Naive thymus-derived CD4-positive, alpha-beta T cell (primary cell): ENCODE measurements at regions of chr6 and their contacts with region 1.

Region 1: DNA sequence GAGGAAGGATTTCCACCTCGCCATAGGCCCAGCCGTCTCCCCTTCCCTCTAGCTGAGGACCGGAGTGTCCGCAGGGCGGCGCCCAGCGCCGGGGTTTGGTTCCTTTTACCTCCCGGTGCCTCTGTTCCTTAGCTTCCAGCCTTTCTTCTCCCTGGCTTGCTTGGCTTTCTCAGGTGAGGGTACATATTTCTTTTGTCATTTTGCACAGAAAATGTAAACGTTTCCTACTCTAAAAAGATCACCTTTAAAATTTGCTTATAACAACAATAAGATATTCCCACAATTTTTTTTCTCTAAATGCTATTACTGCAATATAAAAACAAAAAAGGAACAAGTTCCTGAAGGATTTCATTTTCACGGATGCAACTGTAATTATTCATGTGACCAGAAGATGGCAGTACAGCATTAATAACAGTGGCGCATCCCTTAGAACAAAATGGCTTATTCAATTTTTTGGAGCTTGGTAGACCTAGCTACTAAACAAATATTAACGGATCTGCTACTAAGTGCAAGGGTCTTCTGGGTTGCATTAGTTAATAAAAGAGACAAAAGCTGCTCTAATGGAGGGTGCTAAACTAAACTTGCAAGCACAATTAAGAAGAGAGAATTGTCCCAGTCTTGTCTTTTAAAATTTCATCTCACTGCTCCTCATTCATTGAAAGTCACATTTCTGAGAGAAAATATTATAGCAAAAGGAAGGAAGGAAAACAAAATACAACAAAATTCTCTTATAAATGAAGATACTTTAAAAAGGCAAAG is 172.9 kb downstream of the ADGRG6 start:
- DNase-seq: peak in 7 of 9 donors; percentile 13 to 57 (median 48)
- ATAC-seq: peak; percentile 67
- H3K4me3 ChIP-seq: no peak overlapping the region
- H3K4me3 Mint-ChIP-seq: no peak overlapping the region
- H3K27ac ChIP-seq: no peak overlapping the region
- H3K27ac Mint-ChIP-seq: peak overlapping the region in 3 of 9 donors; percentile 10 to 48 (median 24)
- H3K4me1 ChIP-seq: no peaks in the 10 kb centered on the region
- H3K4me1 Mint-ChIP-seq: peaks cover 0 to 12% (median 6%) of the 10 kb centered on the region in 7 donors
- H3K27me3 ChIP-seq: no peaks in the 10 kb centered on the region
- H3K27me3 Mint-ChIP-seq: peaks cover 0 to 5% (median 0%) of the 10 kb centered on the region in 5 donors

Region 2: GRCh38 chr6:142146828-142147662 is 327.7 kb before region 1 on chr6 and contains the starts of genes NMBR and VTA1:
- CTCF ChIA-PET with region 1: interaction called, 3 read pairs
- POLR2A ChIA-PET with region 1: no interaction called
- intact Hi-C with region 1: loop called in 1 of 2 experiments (anchors 5 kb)
- DNase-seq: peak; percentile 81 to 98 (median 97)
- ATAC-seq: peak; percentile 99
- H3K4me3 ChIP-seq: peak within 1 kb of the TSS; percentile 95
- H3K4me3 Mint-ChIP-seq: peak within 1 kb of the TSS; percentile 88 to 98 (median 95)
- H3K27ac ChIP-seq: peak within 1 kb of the TSS; percentile 75
- H3K27ac Mint-ChIP-seq: peak within 1 kb of the TSS; percentile 80 to 98 (median 94)
- H3K4me1 ChIP-seq: peaks cover 22 to 25% of the 10 kb centered on the region in 2 donors
- H3K4me1 Mint-ChIP-seq: peaks cover 36 to 73% (median 65%) of the 10 kb centered on the region in 7 donors
- H3K27me3 ChIP-seq: no peaks in the 10 kb centered on the region
- H3K27me3 Mint-ChIP-seq: peaks cover 0 to 2% (median 0%) of the 10 kb centered on the region in 5 donors
- total RNA-seq, gene NMBR: not detected
- total RNA-seq, gene VTA1: 13.6 to 41.3 (median 32.6) TPM

Region 3: GRCh38 chr6:142387997-142388815 is 86.5 kb before region 1 on chr6:
- CTCF ChIA-PET with region 1: interaction called, 7 read pairs
- POLR2A ChIA-PET with region 1: no interaction called
- intact Hi-C with region 1: loop called in 1 of 2 experiments (anchors 2 kb)
- DNase-seq: peak in 7 of 9 donors; percentile 22 to 50 (median 26)
- ATAC-seq: peak; percentile 67
- H3K4me3 ChIP-seq: no peak overlapping the region
- H3K4me3 Mint-ChIP-seq: no peak overlapping the region
- H3K27ac ChIP-seq: no peak overlapping the region
- H3K27ac Mint-ChIP-seq: no peak overlapping the region
- H3K4me1 ChIP-seq: peaks cover 0 to 9% of the 10 kb centered on the region in 2 donors
- H3K4me1 Mint-ChIP-seq: peaks cover 0 to 28% (median 9%) of the 10 kb centered on the region in 7 donors
- H3K27me3 ChIP-seq: no peaks in the 10 kb centered on the region
- H3K27me3 Mint-ChIP-seq: peaks cover 0 to 49% (median 0%) of the 10 kb centered on the region in 5 donors

Region 4: GRCh38 chr6:142746524-142746923 is 271.8 kb after region 1 on chr6:
- CTCF ChIA-PET with region 1: no interaction called
- POLR2A ChIA-PET with region 1: no interaction called
- intact Hi-C with region 1: loop called in 1 of 2 experiments (anchors 2 kb)
- DNase-seq: peak in 7 of 9 donors; percentile 16 to 49 (median 31)
- ATAC-seq: peak; percentile 69
- H3K4me3 ChIP-seq: no peak overlapping the region
- H3K4me3 Mint-ChIP-seq: no peak overlapping the region
- H3K27ac ChIP-seq: no peak overlapping the region
- H3K27ac Mint-ChIP-seq: peak overlapping the region in 2 of 9 donors; percentile 26 to 60
- H3K4me1 ChIP-seq: no peaks in the 10 kb centered on the region
- H3K4me1 Mint-ChIP-seq: peaks cover 0 to 30% (median 17%) of the 10 kb centered on the region in 7 donors
- H3K27me3 ChIP-seq: no peaks in the 10 kb centered on the region
- H3K27me3 Mint-ChIP-seq: peaks cover 0 to 4% (median 0%) of the 10 kb centered on the region in 5 donors

Region 5: GRCh38 chr6:143026696-143027449 is 552.2 kb after region 1 on chr6:
- CTCF ChIA-PET with region 1: interaction called, 9 read pairs
- POLR2A ChIA-PET with region 1: no interaction called
- intact Hi-C with region 1: loop called (anchors 1 kb)
- DNase-seq: peak in 7 of 9 donors; percentile 3 to 47 (median 34)
- ATAC-seq: peak; percentile 76
- H3K4me3 ChIP-seq: no peak overlapping the region
- H3K4me3 Mint-ChIP-seq: no peak overlapping the region
- H3K27ac ChIP-seq: no peak overlapping the region
- H3K27ac Mint-ChIP-seq: peak overlapping the region in 3 of 9 donors; percentile 28 to 76 (median 53)
- H3K4me1 ChIP-seq: no peaks in the 10 kb centered on the region
- H3K4me1 Mint-ChIP-seq: peaks cover 0 to 5% (median 0%) of the 10 kb centered on the region in 7 donors
- H3K27me3 ChIP-seq: no peaks in the 10 kb centered on the region
- H3K27me3 Mint-ChIP-seq: no peaks in the 10 kb centered on the region

Region 6: GRCh38 chr6:143427109-143427817 is 952.6 kb after region 1 on chr6:
- CTCF ChIA-PET with region 1: interaction called, 39 read pairs
- POLR2A ChIA-PET with region 1: no interaction called
- intact Hi-C with region 1: loop called (anchors 1 kb)
- DNase-seq: peak; percentile 53 to 80 (median 73)
- ATAC-seq: peak; percentile 99
- H3K4me3 ChIP-seq: no peak overlapping the region
- H3K4me3 Mint-ChIP-seq: no peak overlapping the region
- H3K27ac ChIP-seq: no peak overlapping the region
- H3K27ac Mint-ChIP-seq: peak overlapping the region in 3 of 9 donors; percentile 25 to 75 (median 28)
- H3K4me1 ChIP-seq: no peaks in the 10 kb centered on the region
- H3K4me1 Mint-ChIP-seq: peaks cover 0 to 5% (median 0%) of the 10 kb centered on the region in 7 donors
- H3K27me3 ChIP-seq: no peaks in the 10 kb centered on the region
- H3K27me3 Mint-ChIP-seq: no peaks in the 10 kb centered on the region

Region 7: DNA sequence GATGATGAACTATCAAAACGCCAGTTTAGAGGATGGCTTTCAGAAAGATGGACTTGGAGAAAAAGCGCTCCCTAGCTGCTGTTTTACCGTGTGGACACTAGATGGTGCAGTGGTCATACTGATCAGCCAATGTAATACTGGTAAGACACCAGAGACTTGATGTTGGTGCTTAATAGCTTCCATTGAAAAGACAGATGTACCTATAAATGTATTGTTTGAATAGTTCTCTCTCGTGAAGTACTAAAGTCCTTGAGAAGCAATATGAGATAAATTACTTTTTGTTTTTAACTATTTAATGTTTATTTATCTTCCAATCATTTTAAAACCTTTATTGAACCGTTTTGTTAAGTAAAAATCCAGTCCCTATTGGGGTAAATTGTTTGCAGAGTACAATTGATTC is 1100.7 kb after region 1 on chr6:
- CTCF ChIA-PET with region 1: interaction called, 3 read pairs
- POLR2A ChIA-PET with region 1: no interaction called
- intact Hi-C with region 1: loop called in 1 of 2 experiments (anchors 1 kb)
- DNase-seq: peak in 8 of 9 donors; percentile 34 to 79 (median 67)
- ATAC-seq: peak; percentile 99
- H3K4me3 ChIP-seq: no peak overlapping the region
- H3K4me3 Mint-ChIP-seq: no peak overlapping the region
- H3K27ac ChIP-seq: no peak overlapping the region
- H3K27ac Mint-ChIP-seq: peak overlapping the region in 1 of 9 donors; percentile 15
- H3K4me1 ChIP-seq: no peaks in the 10 kb centered on the region
- H3K4me1 Mint-ChIP-seq: peaks cover 0 to 9% (median 0%) of the 10 kb centered on the region in 7 donors
- H3K27me3 ChIP-seq: no peaks in the 10 kb centered on the region
- H3K27me3 Mint-ChIP-seq: no peaks in the 10 kb centered on the region